ENCODE measurements at regions of chr22 and their contacts with region 1.

Region 1: DNA sequence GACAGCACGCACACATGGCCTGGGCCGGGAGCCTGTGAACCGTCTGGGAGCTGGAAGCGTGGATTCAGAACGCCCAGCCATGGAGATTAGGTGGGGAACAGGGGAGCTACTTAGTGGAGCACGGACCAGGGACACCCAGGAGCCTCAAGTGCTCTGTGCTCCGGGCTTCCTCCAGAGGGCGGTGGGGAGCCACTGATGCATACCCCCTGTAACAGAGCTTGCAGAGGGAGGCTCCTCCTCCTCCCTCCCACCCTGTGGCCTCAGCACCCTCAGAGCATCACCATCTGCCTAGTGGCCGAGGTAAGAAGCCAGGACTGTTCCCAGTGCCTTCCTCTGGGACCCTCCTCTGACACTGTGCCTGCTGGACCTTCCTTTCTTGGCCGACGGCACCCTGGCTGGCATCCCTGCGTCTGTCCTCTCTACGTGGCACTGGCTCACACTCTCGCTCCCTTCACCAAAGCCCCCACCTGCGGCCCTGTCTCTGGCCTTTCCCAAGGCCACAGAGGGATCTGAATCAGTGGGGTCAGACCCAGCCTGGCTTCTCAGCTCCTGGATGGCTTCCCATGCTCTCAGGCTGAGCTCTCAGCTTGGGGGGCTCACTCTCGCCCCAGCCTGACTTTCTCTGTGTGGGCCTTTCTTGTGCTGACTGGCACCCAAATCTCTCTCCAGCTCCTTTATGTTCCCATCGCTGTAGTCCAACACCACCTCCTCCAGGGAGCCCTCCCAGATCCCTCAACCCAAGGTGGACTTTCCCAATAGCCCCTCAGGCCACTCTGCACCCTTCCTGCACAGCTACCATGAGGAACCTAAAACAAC is 780.9 kb downstream of the BRD1 start:
- DNase-seq: peak; percentile 61
- H3K4me3 Mint-ChIP-seq: no peak overlapping the region
- H3K27ac Mint-ChIP-seq: no peak overlapping the region
- H3K4me1 Mint-ChIP-seq: no peaks in the 10 kb centered on the region
- H3K27me3 Mint-ChIP-seq: peaks cover 4% of the 10 kb centered on the region

Region 2: GRCh38 chr22:48605856-48606481 is 440.8 kb before region 1 on chr22:
- CTCF ChIA-PET with region 1: no interaction called
- intact Hi-C with region 1: no loop called
- DNase-seq: no peak
- H3K4me3 Mint-ChIP-seq: no peak overlapping the region
- H3K27ac Mint-ChIP-seq: no peak overlapping the region
- H3K4me1 Mint-ChIP-seq: no peaks in the 10 kb centered on the region
- H3K27me3 Mint-ChIP-seq: peaks cover 2% of the 10 kb centered on the region

Region 3: DNA sequence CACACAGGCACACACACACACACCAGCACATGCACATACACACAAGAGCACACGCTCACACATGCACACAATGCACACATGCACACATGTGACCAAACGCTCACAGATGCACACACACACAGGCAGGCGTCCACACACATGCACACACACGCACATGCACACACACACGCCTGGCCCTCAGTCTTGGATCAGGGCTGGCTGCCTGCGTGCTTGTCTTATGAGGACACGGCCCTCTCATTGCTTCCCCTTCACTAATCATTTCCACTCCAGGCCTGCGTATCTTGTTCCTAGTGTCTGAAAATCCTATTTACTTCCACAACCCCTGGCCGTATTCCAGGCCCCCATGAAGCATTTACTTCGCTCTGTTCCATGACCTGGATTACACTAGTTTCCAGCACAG is 40.4 kb after region 1 on chr22:
- CTCF ChIA-PET with region 1: no interaction called
- intact Hi-C with region 1: no loop called
- DNase-seq: no peak
- H3K4me3 Mint-ChIP-seq: no peak overlapping the region
- H3K27ac Mint-ChIP-seq: no peak overlapping the region
- H3K4me1 Mint-ChIP-seq: no peaks in the 10 kb centered on the region
- H3K27me3 Mint-ChIP-seq: peaks cover 4% of the 10 kb centered on the region

Region 4: DNA sequence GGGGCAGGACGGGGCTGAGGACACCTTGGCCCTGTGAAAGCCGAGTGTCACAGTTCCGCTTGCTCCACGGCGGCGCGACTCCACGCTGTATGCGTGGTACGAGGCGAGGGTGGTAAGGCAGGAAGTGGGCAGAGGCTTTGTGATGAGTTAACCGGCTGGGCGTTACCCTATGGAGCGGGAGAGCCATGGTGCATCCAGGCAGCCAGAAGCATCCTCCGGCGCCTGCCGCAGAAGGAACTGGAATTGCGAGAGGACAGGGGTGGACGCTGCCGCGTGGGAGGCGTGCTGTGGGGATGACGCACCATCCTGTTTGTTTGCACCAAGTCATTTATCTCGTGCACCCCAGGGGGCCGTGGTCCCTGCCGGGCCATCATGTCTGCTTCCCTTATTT is 137.1 kb after region 1 on chr22:
- CTCF ChIA-PET with region 1: no interaction called
- intact Hi-C with region 1: no loop called
- DNase-seq: no peak
- H3K4me3 Mint-ChIP-seq: no peak overlapping the region
- H3K27ac Mint-ChIP-seq: no peak overlapping the region
- H3K4me1 Mint-ChIP-seq: no peaks in the 10 kb centered on the region
- H3K27me3 Mint-ChIP-seq: peaks cover 10% of the 10 kb centered on the region

Region 5: DNA sequence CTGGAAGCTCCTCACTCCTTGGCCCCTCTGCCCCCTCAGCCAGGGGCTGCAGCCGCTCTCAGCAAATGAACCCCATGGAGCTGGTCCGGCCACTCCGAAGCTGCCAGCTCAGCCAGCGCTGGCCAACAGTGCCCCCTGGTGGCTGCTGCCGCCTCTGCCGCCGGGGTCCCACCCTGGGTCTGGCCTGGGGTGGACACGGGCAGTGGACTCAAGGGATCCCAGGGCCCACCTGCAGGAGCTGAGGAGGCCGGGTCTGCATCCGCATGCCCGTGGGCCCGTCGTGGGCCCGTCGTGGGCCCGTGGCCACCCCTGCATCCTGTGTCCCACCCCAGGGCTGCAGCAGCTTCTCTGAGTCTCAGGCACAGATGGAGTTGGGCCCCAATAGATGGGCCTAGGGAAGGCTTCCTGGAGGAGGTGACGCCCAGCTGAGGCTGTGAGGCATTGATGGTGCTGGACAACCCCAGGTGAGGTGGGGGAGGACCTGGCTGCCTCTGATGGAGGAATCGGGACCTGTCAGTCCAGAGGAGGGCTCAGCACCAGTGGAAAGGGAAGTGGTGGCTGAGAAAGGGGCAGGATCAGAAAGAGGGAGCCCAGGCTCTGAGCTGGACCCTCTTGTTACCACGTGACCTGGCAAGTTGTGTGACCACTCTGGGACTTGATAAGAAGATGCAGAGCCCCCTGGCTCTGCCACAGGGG is 258.6 kb after region 1 on chr22:
- CTCF ChIA-PET with region 1: interaction called, 14 read pairs
- intact Hi-C with region 1: loop called (anchors 2 kb)
- DNase-seq: peak; percentile 70
- H3K4me3 Mint-ChIP-seq: no peak overlapping the region
- H3K27ac Mint-ChIP-seq: no peak overlapping the region
- H3K4me1 Mint-ChIP-seq: no peaks in the 10 kb centered on the region
- H3K27me3 Mint-ChIP-seq: peaks cover 22% of the 10 kb centered on the region

Region 6: GRCh38 chr22:49632199-49633009 is 585.6 kb after region 1 on chr22:
- CTCF ChIA-PET with region 1: no interaction called
- intact Hi-C with region 1: loop called (anchors 5 kb)
- DNase-seq: peak; percentile 14
- H3K4me3 Mint-ChIP-seq: no peak overlapping the region
- H3K27ac Mint-ChIP-seq: no peak overlapping the region
- H3K4me1 Mint-ChIP-seq: peaks cover 3% of the 10 kb centered on the region
- H3K27me3 Mint-ChIP-seq: no peaks in the 10 kb centered on the region

Region 7: GRCh38 chr22:49724893-49725474 is 678.2 kb after region 1 on chr22:
- CTCF ChIA-PET with region 1: no interaction called
- intact Hi-C with region 1: loop called (anchors 10 kb)
- DNase-seq: peak; percentile 84
- H3K4me3 Mint-ChIP-seq: peak overlapping the region; percentile 68
- H3K27ac Mint-ChIP-seq: no peak overlapping the region
- H3K4me1 Mint-ChIP-seq: peaks cover 9% of the 10 kb centered on the region
- H3K27me3 Mint-ChIP-seq: peaks cover 15% of the 10 kb centered on the region